Colonic mucosa (tissue), 4 donors: ENCODE measurements at regions of chr19 and their contacts with region 1.

Region 1: DNA sequence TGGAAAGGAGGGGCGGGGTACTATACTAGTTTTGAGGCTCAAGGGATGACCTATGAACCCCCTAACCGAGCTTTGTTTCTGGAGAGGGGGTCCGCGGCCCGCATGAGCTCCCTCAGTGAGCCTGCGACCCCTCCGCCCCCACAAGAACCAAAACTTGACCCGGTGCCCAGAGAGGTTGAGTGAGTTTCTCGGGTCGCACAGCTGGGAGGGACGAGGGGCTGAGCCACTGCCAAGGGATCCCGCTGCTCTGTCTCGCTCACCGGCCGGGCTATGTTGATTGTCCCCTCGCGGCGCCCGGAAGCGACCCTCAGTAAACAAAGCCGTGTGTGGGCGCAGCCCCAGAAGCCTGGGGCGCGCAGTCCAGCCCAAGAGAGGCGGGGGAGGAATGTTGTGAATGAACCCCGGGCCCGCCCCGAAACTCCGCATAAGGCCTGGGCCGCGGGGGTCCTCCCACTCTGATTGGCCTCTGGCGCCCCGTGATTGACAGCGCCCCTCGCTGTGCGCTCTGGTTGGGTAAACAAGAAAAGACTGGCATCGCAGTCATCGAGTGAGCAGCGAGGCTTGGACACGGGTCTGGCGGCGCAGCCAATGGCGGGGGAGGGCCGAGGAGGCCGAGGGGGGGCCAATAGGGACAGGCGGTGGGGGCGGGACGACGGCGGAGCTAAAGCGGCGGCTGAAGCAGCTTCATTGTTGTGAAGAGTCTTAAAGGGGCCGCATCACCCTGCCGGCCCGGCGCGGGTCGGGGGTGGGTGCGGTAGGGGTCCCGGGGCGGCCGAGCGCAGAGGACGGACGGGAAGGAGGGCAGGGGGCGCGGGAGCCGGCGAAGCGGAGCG is at the start of gene ZSWIM4:
- DNase-seq: peak; percentile 99
- H3K4me3 ChIP-seq: peak within 1 kb of the TSS; percentile 69
- H3K27ac ChIP-seq: peak within 1 kb of the TSS; percentile 79
- H3K4me1 ChIP-seq: no peaks in the 10 kb centered on the region
- H3K27me3 ChIP-seq: no peaks in the 10 kb centered on the region
- CTCF ChIP-seq: no peak
- total RNA-seq, gene ZSWIM4: 2.9 to 4.3 TPM

Region 2: DNA sequence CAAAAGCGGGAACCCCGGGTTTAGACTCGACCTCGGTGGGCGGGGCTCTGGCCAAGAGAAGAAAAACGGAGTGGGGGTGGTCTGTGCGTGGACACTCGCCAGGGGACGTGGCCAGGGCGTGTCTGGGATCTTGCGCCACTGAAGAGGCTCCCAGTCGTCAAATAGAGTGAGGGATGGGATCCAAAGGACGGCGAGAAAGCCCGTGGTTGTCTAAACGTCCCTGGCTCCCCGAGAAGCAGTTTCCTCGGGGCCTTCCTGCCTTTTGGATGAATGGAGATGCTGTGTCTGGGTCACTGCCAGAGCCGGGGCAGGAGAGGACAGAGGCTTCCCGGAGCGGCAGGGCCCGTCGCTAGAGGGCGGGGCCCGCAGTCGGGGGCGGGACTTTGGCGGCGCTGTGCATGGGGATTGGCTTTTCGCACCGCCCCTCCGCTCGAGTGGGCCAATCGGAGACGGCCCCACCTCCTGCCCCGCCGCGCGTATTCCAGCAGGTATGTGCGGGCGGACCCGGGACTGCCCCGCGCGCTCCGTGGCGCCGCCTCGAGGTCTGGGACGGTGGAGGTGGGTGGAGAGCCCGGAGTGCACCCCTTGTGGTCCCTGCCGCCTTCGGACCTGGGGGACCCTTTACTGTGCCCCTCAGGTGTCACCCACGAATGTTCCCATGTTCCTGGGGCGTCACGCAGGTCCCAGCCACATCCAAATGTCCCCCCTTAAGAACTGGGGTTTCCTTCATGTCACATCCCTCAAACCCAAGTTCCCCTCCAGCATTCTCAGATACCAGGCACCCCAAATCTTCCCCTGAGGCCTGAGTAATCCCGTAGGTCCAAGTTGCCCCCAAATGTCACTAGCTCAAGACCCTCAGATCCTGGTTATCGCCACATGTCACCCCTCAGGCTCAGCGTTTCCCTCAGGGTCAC is 38.6 kb after region 1 on chr19:
- intact Hi-C with region 1: loop called (anchors 5 kb)
- DNase-seq: peak; percentile 97
- H3K4me3 ChIP-seq: no peak overlapping the region
- H3K27ac ChIP-seq: peak overlapping the region; percentile 7
- H3K4me1 ChIP-seq: no peaks in the 10 kb centered on the region
- H3K27me3 ChIP-seq: no peaks in the 10 kb centered on the region
- CTCF ChIP-seq: peak; percentile 37

Region 3: GRCh38 chr19:13859361-13859880 is 64.4 kb after region 1 on chr19:
- intact Hi-C with region 1: no loop called
- DNase-seq: no peak
- H3K4me3 ChIP-seq: no peak overlapping the region
- H3K27ac ChIP-seq: no peak overlapping the region
- H3K4me1 ChIP-seq: no peaks in the 10 kb centered on the region
- H3K27me3 ChIP-seq: no peaks in the 10 kb centered on the region
- CTCF ChIP-seq: no peak

Region 4: GRCh38 chr19:13986348-13986904 is 191.5 kb after region 1 on chr19:
- intact Hi-C with region 1: no loop called
- DNase-seq: peak; percentile 80
- H3K4me3 ChIP-seq: no peak overlapping the region
- H3K27ac ChIP-seq: peak overlapping the region; percentile 77
- H3K4me1 ChIP-seq: no peaks in the 10 kb centered on the region
- H3K27me3 ChIP-seq: no peaks in the 10 kb centered on the region
- CTCF ChIP-seq: no peak